ENCODE measurements at regions of chr12 and their contacts with region 1.

Region 1: GRCh38 chr12:108664338-108665258 is 30.9 kb upstream of the SELPLG start:
- DNase-seq: peak; percentile 98
- ATAC-seq: peak; percentile 86
- H3K4me3 ChIP-seq: no peak overlapping the region
- H3K27ac ChIP-seq: peak overlapping the region; percentile 13; the same call in 1 of the 2 replicates
- H3K4me1 ChIP-seq: peaks cover 22% of the 10 kb centered on the region
- H3K27me3 ChIP-seq: no peaks in the 10 kb centered on the region
- CTCF ChIP-seq: peak; percentile 96

Region 2: GRCh38 chr12:108289350-108290161 is 375.0 kb before region 1 on chr12:
- CTCF ChIA-PET with region 1: no interaction called
- POLR2A ChIA-PET with region 1: no interaction called
- intact Hi-C with region 1: no loop called
- DNase-seq: no peak
- ATAC-seq: no peak
- H3K4me3 ChIP-seq: no peak overlapping the region
- H3K27ac ChIP-seq: no peak overlapping the region
- H3K4me1 ChIP-seq: no peaks in the 10 kb centered on the region
- H3K27me3 ChIP-seq: peaks cover 78% of the 10 kb centered on the region
- CTCF ChIP-seq: no peak

Region 3: DNA sequence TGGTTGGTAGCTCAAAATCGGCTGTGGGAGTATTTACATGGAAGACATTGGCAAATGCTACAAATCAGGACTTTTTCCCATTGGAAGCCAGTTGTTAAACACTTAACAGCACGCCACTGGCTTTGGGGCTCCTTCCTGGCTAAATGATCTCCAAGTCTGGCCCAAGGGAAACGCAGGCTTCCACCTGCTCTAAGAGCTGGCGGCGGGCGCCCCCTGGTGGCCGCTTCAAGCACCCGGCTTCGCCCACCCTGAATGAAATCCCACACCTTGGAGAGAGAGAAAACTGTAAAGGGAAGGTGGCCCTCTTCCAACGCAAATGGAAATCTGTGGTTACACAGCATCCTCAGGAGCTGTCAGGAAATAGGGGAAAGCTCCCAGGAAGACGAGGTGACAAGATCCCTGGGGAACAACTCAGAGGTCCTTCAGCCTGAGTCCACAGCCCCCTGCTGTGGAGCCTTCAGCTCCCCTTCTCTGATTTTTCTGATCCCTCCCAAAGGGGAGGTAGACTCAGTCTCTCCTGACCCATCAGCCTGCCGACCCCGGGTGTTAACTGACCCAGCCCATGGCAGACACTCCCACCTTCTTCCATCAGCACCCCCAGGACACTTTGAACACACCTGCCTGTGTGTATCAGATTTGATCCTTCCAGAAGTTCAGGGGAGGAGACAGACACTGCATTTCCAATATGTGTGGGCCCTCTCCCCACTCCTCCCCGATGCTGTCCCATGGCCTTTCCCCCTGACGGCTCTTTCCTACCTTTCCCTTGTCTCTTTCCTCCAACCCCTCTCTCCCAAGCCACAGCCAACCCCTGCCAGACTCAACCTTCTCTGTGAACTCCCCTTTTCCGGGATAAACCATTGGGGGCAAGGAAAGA is 46.3 kb before region 1 on chr12:
- CTCF ChIA-PET with region 1: no interaction called
- POLR2A ChIA-PET with region 1: no interaction called
- intact Hi-C with region 1: loop called (anchors 2 kb)
- DNase-seq: peak; percentile 91
- ATAC-seq: peak; percentile 98
- H3K4me3 ChIP-seq: no peak overlapping the region
- H3K27ac ChIP-seq: no peak overlapping the region
- H3K4me1 ChIP-seq: peaks cover 11% of the 10 kb centered on the region
- H3K27me3 ChIP-seq: no peaks in the 10 kb centered on the region
- CTCF ChIP-seq: peak; percentile 99

Region 4: GRCh38 chr12:108691175-108691997 is 26.8 kb after region 1 on chr12:
- CTCF ChIA-PET with region 1: interaction called, 5 read pairs
- POLR2A ChIA-PET with region 1: interaction called, 3 read pairs
- intact Hi-C with region 1: loop called (anchors 2 kb)
- DNase-seq: peak; percentile 100
- ATAC-seq: peak; percentile 90
- H3K4me3 ChIP-seq: peak overlapping the region; percentile 58
- H3K27ac ChIP-seq: peak overlapping the region; percentile 89
- H3K4me1 ChIP-seq: peaks cover 68% of the 10 kb centered on the region
- H3K27me3 ChIP-seq: no peaks in the 10 kb centered on the region
- CTCF ChIP-seq: 0 out of 2 replicates have a peak, but pooled peaks have one; percentile 14

Region 5: GRCh38 chr12:108744021-108744897 is 79.7 kb after region 1 on chr12:
- CTCF ChIA-PET with region 1: interaction called, 16 read pairs
- POLR2A ChIA-PET with region 1: no interaction called
- intact Hi-C with region 1: no loop called
- DNase-seq: no peak
- ATAC-seq: no peak
- H3K4me3 ChIP-seq: no peak overlapping the region
- H3K27ac ChIP-seq: no peak overlapping the region
- H3K4me1 ChIP-seq: no peaks in the 10 kb centered on the region
- H3K27me3 ChIP-seq: no peaks in the 10 kb centered on the region
- CTCF ChIP-seq: no peak

Region 6: GRCh38 chr12:108950991-108951739 is 286.6 kb after region 1 on chr12:
- CTCF ChIA-PET with region 1: no interaction called
- POLR2A ChIA-PET with region 1: no interaction called
- intact Hi-C with region 1: loop called (anchors 10 kb)
- DNase-seq: peak; percentile 91
- ATAC-seq: peak; percentile 77
- H3K4me3 ChIP-seq: peak overlapping the region; percentile 36; the same call in 1 of the 2 replicates
- H3K27ac ChIP-seq: no peak overlapping the region
- H3K4me1 ChIP-seq: no peaks in the 10 kb centered on the region
- H3K27me3 ChIP-seq: peaks cover 16% of the 10 kb centered on the region; the same call in 1 of the 2 replicates
- CTCF ChIP-seq: peak; percentile 97

Measured in PC-3 (cell line).